ENCODE measurements at regions of chr11 and their contacts with region 1.

Region 1: GRCh38 chr11:76885390-76886097 is 24.8 kb downstream of the ACER3 start:
- DNase-seq: no peak
- H3K4me3 ChIP-seq: no peak overlapping the region
- H3K4me3 Mint-ChIP-seq: no peak overlapping the region
- H3K27ac Mint-ChIP-seq: no peak overlapping the region
- H3K4me1 ChIP-seq: peaks cover 15% of the 10 kb centered on the region
- H3K4me1 Mint-ChIP-seq: peaks cover 12% of the 10 kb centered on the region
- H3K27me3 ChIP-seq: no peaks in the 10 kb centered on the region
- H3K27me3 Mint-ChIP-seq: no peaks in the 10 kb centered on the region
- CTCF ChIP-seq: no peak

Region 2: DNA sequence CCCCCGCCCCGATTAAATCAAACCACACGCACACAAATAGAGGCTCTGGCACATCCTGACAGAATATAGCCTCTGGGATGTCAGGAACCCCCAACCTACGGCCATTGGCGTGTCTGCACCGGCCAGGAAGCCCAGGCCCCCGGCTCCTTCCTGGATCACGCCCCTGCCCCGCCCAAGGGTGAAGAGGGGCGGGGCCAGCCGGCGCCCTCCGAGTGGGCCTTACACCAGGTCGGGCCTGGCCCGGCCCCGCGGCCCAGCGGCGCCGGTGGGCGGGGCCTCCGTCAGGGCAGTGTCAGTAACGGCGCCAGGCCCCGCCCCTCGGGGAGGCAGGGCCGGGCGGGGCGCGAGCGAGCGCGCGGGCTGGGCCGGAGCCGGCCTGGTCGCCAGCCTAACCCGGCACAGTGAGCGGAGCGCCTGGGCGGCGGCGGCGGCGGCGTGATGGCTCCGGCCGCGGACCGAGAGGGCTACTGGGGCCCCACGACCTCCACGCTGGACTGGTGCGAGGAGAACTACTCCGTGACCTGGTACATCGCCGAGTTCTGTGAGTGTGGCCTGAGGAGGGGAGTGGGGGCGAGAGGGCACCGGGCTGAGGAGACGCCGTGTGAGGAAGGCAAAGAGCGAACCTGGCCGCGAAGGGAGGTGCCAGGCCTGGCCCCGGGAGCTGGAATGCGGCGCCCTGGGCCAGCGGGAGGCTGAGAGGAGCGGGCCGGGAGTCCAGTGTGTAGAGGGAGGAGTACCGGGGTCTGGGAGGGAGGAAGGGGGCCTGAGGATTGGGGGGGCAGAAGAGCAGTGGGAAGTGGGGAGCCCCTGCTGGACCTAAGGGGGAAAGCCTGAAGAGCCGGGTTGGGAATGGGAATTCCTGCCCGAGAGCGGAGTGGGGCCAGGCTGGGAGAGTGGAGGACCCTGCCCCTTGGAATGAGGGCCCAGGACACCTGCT is 24.7 kb before region 1 on chr11 and contains the start of gene ACER3:
- CTCF ChIA-PET with region 1: no interaction called
- POLR2A ChIA-PET with region 1: no interaction called
- intact Hi-C with region 1: loop called (anchors 2 kb)
- DNase-seq: peak; percentile 95 to 99
- H3K4me3 ChIP-seq: peak within 1 kb of the TSS; percentile 73
- H3K4me3 Mint-ChIP-seq: peak within 1 kb of the TSS; percentile 94
- H3K27ac Mint-ChIP-seq: peak within 1 kb of the TSS; percentile 85
- H3K4me1 ChIP-seq: peaks cover 27% of the 10 kb centered on the region
- H3K4me1 Mint-ChIP-seq: peaks cover 35% of the 10 kb centered on the region
- H3K27me3 ChIP-seq: no peaks in the 10 kb centered on the region
- H3K27me3 Mint-ChIP-seq: no peaks in the 10 kb centered on the region
- CTCF ChIP-seq: peak in 1 of 2 experiments; percentile 72
- total RNA-seq, gene ACER3: 37.5 and 40.6 TPM in 2 replicates

Region 3: DNA sequence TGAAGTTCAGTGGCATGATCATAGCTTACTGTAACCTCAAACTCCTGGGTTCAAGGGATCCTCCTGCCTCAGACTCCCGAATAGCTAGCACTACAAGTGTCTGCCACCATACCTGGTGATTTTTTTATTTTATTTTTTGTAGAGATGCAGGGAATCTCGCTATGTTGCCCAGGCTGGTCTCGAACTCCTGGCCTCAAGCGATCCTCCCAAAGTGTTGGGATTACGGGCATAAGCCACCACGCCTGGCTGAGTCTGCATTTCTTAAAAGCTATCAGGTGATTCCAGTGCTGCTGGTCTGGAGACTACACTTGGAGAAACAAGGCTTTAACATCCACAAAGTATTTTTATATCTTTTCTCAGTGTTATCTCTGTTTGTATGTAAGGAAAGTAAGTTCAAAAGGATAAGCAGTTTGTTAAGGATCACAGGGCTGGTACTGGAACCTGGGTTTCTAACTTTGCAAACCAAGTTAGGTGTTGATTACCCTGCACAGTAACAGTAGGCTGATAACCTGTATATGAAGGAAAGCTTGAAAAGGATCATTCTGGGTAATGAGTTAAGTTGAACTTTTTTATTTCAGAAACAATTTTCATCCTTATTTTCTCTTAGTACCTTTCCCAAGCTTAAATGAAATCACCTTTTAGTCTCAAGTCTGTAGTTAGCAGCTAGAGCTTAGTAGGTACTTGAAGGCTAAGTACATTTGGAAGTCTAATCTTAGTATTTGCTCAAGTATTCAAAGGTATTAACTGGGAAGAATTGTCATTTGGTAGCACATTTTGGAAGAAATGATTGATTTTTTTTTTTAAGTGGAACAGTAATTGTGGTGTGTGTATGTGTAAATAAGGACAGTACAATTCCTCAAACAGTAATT is 12.4 kb before region 1 on chr11:
- CTCF ChIA-PET with region 1: no interaction called
- POLR2A ChIA-PET with region 1: no interaction called
- intact Hi-C with region 1: loop called (anchors 2 kb)
- DNase-seq: no peak
- H3K4me3 ChIP-seq: no peak overlapping the region
- H3K4me3 Mint-ChIP-seq: no peak overlapping the region
- H3K27ac Mint-ChIP-seq: no peak overlapping the region
- H3K4me1 ChIP-seq: peaks cover 10% of the 10 kb centered on the region
- H3K4me1 Mint-ChIP-seq: peaks cover 20% of the 10 kb centered on the region
- H3K27me3 ChIP-seq: no peaks in the 10 kb centered on the region
- H3K27me3 Mint-ChIP-seq: no peaks in the 10 kb centered on the region
- CTCF ChIP-seq: no peak